Dendritic cell treated with granulocyte-macrophage colony-stimulating factor and Interleukin-4, amounts not matched to agents 40 ng/mL and 50 ng/mL, for 4 days (primary cell): ENCODE measurements at regions of chr3 and their contacts with region 1.

Region 1: GRCh38 chr3:168154114-168154513 is 58.4 kb upstream of the GOLIM4 start:
- H3K4me3 Mint-ChIP-seq: no peak overlapping the region
- H3K27ac Mint-ChIP-seq: no peak overlapping the region
- H3K4me1 Mint-ChIP-seq: peaks cover 33% of the 10 kb centered on the region
- H3K27me3 Mint-ChIP-seq: peaks cover 2% of the 10 kb centered on the region

Region 2: GRCh38 chr3:166993015-166993630 is 1161.0 kb before region 1 on chr3:
- intact Hi-C with region 1: no loop called
- H3K4me3 Mint-ChIP-seq: no peak overlapping the region
- H3K27ac Mint-ChIP-seq: no peak overlapping the region
- H3K4me1 Mint-ChIP-seq: no peaks in the 10 kb centered on the region
- H3K27me3 Mint-ChIP-seq: no peaks in the 10 kb centered on the region

Region 3: GRCh38 chr3:168113848-168114247 is 40.3 kb before region 1 on chr3:
- intact Hi-C with region 1: loop called (anchors 5 kb)
- H3K4me3 Mint-ChIP-seq: no peak overlapping the region
- H3K27ac Mint-ChIP-seq: no peak overlapping the region
- H3K4me1 Mint-ChIP-seq: no peaks in the 10 kb centered on the region
- H3K27me3 Mint-ChIP-seq: no peaks in the 10 kb centered on the region

Region 4: GRCh38 chr3:168197162-168197561 is 43.0 kb after region 1 on chr3:
- intact Hi-C with region 1: no loop called
- H3K4me3 Mint-ChIP-seq: no peak overlapping the region
- H3K27ac Mint-ChIP-seq: no peak overlapping the region
- H3K4me1 Mint-ChIP-seq: no peaks in the 10 kb centered on the region
- H3K27me3 Mint-ChIP-seq: no peaks in the 10 kb centered on the region

Region 5: DNA sequence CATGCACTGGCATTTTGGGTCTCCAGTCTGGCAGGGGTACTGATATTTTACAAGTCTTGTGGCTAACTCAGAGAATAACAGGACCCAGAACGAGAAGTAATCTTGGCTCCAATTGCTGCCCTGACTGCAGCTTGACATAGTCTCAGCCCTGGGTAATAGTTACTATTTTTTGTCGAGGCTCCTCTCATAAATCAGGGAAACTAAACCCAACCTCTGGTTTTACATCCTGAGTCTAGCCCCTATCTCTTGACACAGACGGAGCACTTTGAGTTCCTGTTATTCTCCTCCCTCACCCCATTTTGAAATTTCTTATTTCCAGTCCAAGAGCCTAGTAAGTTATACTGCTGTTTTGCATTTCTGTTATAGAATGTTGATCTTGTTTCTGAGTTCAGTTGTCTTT is 217.7 kb after region 1 on chr3:
- intact Hi-C with region 1: no loop called
- H3K4me3 Mint-ChIP-seq: no peak overlapping the region
- H3K27ac Mint-ChIP-seq: no peak overlapping the region
- H3K4me1 Mint-ChIP-seq: no peaks in the 10 kb centered on the region
- H3K27me3 Mint-ChIP-seq: no peaks in the 10 kb centered on the region